Transverse colon (tissue), 4 donors: ENCODE measurements at regions of chr9 and their contacts with region 1.

Region 1: DNA sequence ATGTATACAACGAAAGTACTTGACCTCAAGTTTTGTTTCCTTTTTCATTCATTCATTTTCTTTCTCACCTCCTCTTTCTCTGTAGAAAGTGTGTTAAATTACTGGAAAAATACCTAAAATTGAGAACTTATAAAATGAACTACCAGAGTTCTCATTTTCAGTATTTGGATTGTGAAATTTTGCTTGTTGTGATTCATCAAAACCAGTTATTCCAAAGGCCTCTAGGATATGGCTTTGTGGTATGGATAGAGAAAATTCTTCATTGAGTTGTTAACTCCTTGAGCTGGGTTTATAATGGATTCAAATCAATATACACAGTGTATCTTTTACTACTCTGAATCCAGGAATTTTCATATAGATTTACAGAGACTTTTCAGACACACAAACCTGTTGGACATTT is 287.6 kb downstream of the KDM4C start:
- DNase-seq: no peak
- H3K4me3 ChIP-seq: no peak overlapping the region
- H3K27ac ChIP-seq: no peak overlapping the region
- H3K4me1 ChIP-seq: no peaks in the 10 kb centered on the region
- H3K27me3 ChIP-seq: no peaks in the 10 kb centered on the region
- CTCF ChIP-seq: no peak
- EP300 ChIP-seq: no peak
- POLR2A ChIP-seq: no peak

Region 2: DNA sequence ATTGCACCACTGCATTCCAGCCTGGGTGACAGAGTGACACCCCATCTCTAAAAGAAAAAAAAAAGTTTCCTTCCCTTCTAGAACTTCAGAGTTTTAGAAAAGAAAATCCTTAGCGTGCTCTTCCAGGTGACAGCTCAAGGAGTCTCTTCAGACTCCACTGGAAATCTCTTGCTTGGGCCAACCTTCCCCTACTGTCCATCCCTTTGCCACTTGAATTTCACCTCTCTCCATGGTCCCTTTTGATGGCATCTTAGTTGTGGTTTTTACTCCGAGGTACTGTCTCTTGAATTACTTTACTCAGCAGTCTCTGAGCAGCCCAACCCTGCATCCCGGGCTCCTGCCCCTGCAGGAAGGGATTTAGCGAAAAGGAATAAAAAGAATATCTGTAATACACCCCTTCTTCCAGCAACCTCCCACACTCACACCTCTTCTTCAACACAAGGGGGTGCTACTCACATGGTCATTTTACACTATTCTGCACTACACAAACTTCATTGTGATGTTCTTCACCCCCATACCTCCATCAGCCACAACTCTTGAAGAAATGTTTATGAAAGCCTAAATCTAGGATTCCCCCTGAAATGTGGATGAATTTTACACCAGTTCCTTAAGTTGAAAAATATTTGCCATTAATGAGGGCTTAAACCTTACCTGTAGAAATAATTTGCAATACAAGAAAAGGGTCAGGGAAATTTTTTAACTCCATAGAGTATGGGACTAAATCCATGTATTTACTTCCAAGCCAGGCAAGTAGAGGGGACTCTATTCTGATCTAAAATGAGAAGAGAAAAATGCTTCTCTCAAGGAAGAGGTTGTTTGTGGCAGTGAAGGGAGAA is 691.3 kb before region 1 on chr9:
- in situ Hi-C with region 1: no loop called
- intact Hi-C with region 1: loop called (anchors 10 kb)
- DNase-seq: no peak
- H3K4me3 ChIP-seq: no peak overlapping the region
- H3K27ac ChIP-seq: no peak overlapping the region
- H3K4me1 ChIP-seq: no peaks in the 10 kb centered on the region
- H3K27me3 ChIP-seq: no peaks in the 10 kb centered on the region
- CTCF ChIP-seq: peak; percentile 63 to 80 (median 77)
- EP300 ChIP-seq: no peak
- POLR2A ChIP-seq: no peak

Region 3: DNA sequence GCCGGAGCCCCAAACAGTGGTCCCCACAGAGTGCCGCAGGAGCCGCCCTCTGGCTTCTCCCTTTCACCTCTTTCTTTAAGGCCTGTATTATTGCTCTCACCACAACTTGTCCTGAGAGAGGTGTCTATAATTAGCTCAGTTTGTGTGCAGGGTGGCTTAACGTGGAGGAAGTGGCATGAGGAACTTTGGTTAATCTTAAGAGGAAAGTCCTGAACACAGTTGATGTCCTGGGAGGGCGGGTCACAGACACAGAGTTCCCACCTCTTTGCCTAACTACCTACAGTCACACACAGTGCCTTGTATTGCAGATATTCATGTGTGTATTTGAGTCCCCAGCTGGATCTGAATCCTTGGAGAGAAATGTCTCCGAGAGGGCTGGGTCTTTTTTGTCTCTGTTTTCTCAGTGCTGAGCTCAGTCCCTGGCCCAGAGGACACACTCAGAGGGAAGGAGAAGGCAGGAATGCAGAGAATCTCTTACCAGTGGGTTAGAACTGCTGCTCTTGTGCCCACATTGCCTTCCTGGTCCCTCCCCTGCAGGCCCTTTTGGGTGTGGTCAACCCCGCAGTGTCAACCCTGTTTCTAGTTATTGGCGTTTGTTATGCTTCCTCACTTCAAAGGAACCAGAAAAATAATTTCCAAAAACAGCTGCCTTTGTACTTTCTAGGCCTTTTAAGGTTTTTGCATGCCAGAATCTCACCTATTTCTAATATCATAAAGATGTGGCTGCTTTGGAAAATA is 105.0 kb after region 1 on chr9:
- in situ Hi-C with region 1: no loop called
- intact Hi-C with region 1: no loop called
- DNase-seq: peak; percentile 56
- H3K4me3 ChIP-seq: no peak overlapping the region
- H3K27ac ChIP-seq: peak overlapping the region; percentile 62 to 70 (median 66)
- H3K4me1 ChIP-seq: peaks cover 14 to 59% (median 32%) of the 10 kb centered on the region in 4 donors
- H3K27me3 ChIP-seq: no peaks in the 10 kb centered on the region
- CTCF ChIP-seq: no peak
- EP300 ChIP-seq: no peak
- POLR2A ChIP-seq: no peak